Breast epithelium (tissue), 4 donors: ENCODE measurements at regions of chr17 and their contacts with region 1.

Region 1: DNA sequence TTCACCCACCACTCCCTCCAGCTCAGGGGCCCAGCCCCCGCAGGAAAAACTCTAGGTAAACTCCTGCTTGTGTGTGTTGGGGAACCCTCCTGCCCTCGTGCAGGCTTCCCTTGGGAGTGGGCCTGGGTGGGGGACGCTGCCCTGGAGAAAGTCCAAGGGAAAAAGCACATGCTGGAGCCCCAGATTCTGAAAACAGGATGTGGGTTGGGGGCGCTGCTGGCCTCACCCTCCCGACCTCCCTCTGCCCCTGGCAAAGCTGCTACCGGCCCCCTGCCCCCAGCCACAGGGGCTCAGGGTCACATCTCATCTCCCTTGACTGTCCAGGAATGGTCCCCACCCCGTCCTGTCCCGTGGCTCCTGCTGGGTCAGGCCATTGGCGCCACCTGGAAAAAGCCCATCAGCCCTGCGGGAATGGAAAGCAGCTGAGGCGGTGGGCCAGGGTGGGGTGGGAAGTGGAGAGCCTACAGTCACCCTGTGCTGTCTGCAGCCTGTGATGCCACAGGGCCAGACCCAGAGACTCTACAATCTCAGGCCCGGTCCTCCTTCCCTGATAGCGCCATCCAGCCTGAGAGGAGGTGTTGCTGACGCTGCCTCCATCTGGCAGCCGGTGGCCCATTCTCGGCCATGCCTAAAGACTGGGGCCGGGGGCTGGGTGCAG is 2.5 kb upstream of the GJD3 start:
- DNase-seq: no peak
- H3K4me3 ChIP-seq: no peak overlapping the region
- H3K27ac ChIP-seq: no peak overlapping the region
- H3K4me1 ChIP-seq: peaks cover 0 to 7% of the 10 kb centered on the region in 2 donors
- H3K27me3 ChIP-seq: no peaks in the 10 kb centered on the region
- CTCF ChIP-seq: no peak
- POLR2A ChIP-seq: no peak

Region 2: DNA sequence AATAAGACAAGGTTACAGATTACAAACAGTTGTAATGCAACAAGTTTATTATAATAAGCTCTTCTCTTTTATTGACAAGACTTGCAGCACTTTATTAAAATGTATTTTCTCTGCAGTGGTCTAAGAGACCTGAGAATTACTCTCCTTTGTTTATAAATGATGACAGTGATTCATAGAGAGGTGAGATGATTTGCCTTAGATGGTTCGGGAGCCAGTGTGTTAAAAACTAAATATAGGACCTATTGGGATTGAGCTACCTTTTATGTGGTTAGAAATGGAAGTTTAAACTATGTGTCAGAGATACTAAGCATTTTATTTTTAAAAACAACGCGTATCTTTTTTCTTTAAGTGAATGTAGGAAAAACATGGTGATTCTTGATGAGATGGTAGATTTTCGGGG is 629.8 kb after region 1 on chr17:
- intact Hi-C with region 1: loop called (anchors 5 kb)
- DNase-seq: no peak
- H3K4me3 ChIP-seq: no peak overlapping the region
- H3K27ac ChIP-seq: no peak overlapping the region
- H3K4me1 ChIP-seq: no peaks in the 10 kb centered on the region
- H3K27me3 ChIP-seq: no peaks in the 10 kb centered on the region
- CTCF ChIP-seq: no peak
- POLR2A ChIP-seq: no peak